ENCODE measurements at regions of chr13 and their contacts with region 1.

Region 1: GRCh38 chr13:79631051-79631659 is 150.2 kb downstream of the NDFIP2 start:
- DNase-seq: no peak
- ATAC-seq: peak; percentile 89

Region 2: DNA sequence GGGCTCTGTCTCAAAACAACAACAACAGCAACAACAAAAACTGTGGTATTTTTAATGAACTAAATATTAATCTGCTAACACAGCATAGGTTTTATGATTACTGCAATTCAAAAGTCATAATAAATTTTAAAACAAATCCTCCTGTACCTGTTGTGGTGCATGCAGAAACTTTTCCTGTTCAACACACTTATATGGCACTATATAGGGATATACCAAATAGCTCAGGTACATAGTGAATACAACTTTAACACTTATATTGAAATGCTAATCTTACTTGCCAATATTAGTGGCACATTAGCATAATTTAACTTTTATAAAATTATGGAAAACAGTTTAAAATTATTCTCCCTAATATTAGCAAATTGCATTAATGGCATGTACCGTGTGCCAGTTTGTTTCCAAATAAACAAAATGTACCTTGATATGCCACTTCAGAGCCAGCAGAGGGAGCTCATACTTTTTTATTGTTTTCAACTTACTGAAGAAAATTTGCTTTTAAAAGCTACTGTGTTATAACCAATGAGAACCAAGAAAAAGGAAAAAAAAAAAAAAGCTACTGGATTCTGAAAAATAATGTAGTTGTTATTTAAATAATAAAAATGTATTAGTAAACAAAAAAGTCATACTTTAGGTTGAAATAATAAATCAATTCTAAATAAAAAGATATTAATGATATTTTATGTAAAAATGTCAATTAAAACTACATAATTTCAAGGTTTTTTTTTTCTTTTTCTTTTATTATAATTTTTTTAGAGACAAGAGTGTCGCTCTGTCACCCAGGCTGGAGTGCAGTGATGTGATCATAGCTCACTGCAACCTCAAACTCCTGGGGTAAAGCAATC is 207.1 kb before region 1 on chr13:
- intact Hi-C with region 1: no loop called
- DNase-seq: no peak
- ATAC-seq: peak; percentile 30

Region 3: DNA sequence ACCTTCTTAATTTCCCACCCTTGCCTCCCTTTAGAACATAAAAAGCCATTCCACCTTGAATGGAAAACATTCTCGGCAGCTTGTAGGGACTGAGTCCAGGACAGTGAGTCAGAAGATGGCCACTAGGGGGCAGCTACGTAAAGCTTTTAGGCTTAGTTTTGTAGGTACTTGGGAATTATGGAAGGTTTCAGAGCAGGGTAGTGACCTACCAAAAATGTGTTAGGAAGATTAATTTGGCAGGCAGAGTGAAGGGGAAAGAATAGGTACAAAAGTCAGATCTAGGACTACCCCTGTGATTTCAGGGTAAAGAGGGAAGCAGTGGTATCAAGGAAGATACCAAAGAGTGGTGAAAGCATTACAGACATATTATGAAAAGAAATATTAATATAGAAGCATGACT is 48.2 kb after region 1 on chr13:
- intact Hi-C with region 1: loop called (anchors 5 kb)
- DNase-seq: peak; percentile 67
- ATAC-seq: peak; percentile 68

Measured in left ventricle myocardium superior (tissue), 1 donor.